Activated T-helper 2 cell treated with anti-CD3 and anti-CD28 coated beads, Interferon-gamma antibody, Interleukin-2, Interleukin-4, amounts not matched to agents 10 μg/mL and 5 μg/mL and 100 μg/mL, durations not matched to agents 14 hours and 24 hours and 36 hours (primary cell): ENCODE measurements at regions of chr9 and their contacts with region 1.

Region 1: GRCh38 chr9:113275157-113276131 is at the starts of genes CDC26 and PRPF4:
- DNase-seq: peak; percentile 94
- H3K4me3 Mint-ChIP-seq: no peak within 1 kb of the TSS
- H3K27ac Mint-ChIP-seq: no peak within 1 kb of the TSS
- H3K4me1 Mint-ChIP-seq: peaks cover 29% of the 10 kb centered on the region
- H3K27me3 Mint-ChIP-seq: no peaks in the 10 kb centered on the region
- total RNA-seq, gene CDC26: 50.2 and 51.2 TPM in 2 replicates
- total RNA-seq, gene PRPF4: 57.3 and 61.0 TPM in 2 replicates

Region 2: DNA sequence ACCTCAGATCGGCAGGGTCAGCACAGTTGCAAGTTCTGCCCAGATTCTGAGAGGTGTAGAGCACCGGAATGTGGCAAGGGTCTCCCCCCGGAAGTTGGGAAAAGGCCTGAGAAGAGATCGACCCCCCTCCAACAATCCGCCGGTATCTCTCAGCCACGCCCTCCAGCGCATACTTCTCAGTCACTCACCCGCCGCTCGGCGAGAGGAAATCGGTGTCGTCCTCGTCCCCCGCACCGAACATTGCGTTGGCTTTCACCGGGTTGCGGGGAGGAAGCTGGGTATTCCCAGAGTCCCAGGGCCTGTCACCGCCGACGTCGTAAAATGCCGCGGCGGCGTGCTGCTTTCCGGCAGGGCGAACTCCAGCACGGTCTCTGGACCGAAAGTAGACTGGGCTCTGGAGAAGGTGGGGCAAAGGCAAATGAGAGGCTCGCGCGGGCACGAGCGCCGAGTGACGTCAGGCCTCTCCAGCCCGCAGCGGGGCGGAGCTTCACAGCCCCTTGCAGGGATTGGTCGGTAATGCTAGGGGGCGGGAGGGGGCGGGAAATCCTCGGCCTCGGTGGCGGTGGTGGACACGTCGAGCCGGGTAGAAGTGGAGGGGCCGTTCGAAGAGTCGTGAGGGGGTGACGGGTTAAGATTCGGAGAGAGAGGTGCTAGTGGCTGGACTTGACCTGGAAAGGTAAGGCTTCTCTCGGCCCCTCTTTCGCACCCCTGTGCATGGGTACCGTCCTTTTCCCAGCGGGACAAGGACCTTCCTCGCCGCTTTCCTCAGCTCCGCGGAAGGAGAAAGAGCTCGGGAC is 54.2 kb before region 1 on chr9 and contains the starts of genes FKBP15 and SLC31A1:
- intact Hi-C with region 1: loop called (anchors 1 kb)
- DNase-seq: peak; percentile 94
- H3K4me3 Mint-ChIP-seq: peak within 1 kb of the TSS; percentile 92
- H3K27ac Mint-ChIP-seq: peak within 1 kb of the TSS; percentile 78
- H3K4me1 Mint-ChIP-seq: peaks cover 41% of the 10 kb centered on the region
- H3K27me3 Mint-ChIP-seq: no peaks in the 10 kb centered on the region
- total RNA-seq, gene FKBP15: 39.6 and 40.4 TPM in 2 replicates
- total RNA-seq, gene SLC31A1: 18.0 and 20.0 TPM in 2 replicates

Region 3: GRCh38 chr9:113317777-113318176 is 42.3 kb after region 1 on chr9:
- intact Hi-C with region 1: no loop called
- DNase-seq: no peak
- H3K4me3 Mint-ChIP-seq: no peak overlapping the region
- H3K27ac Mint-ChIP-seq: no peak overlapping the region
- H3K4me1 Mint-ChIP-seq: no peaks in the 10 kb centered on the region
- H3K27me3 Mint-ChIP-seq: no peaks in the 10 kb centered on the region

Region 4: GRCh38 chr9:113340017-113340699 is 64.7 kb after region 1 on chr9 and contains the start of gene WDR31:
- intact Hi-C with region 1: loop called (anchors 2 kb)
- DNase-seq: peak; percentile 75
- H3K4me3 Mint-ChIP-seq: peak within 1 kb of the TSS; percentile 86
- H3K27ac Mint-ChIP-seq: peak within 1 kb of the TSS; percentile 56
- H3K4me1 Mint-ChIP-seq: peaks cover 37% of the 10 kb centered on the region
- H3K27me3 Mint-ChIP-seq: no peaks in the 10 kb centered on the region
- total RNA-seq, gene WDR31: 1.9 and 2.1 TPM in 2 replicates

Region 5: GRCh38 chr9:113401027-113401792 is 125.8 kb after region 1 on chr9 and contains the start of gene ALAD:
- intact Hi-C with region 1: loop called (anchors 1 kb)
- DNase-seq: peak; percentile 99
- H3K4me3 Mint-ChIP-seq: peak within 1 kb of the TSS; percentile 94
- H3K27ac Mint-ChIP-seq: peak within 1 kb of the TSS; percentile 62
- H3K4me1 Mint-ChIP-seq: peaks cover 20% of the 10 kb centered on the region
- H3K27me3 Mint-ChIP-seq: no peaks in the 10 kb centered on the region
- total RNA-seq, gene ALAD: 27.9 and 28.3 TPM in 2 replicates

Region 6: GRCh38 chr9:113511856-113512761 is 236.7 kb after region 1 on chr9:
- intact Hi-C with region 1: loop called (anchors 2 kb)
- DNase-seq: peak; percentile 66
- H3K4me3 Mint-ChIP-seq: peak overlapping the region; percentile 54
- H3K27ac Mint-ChIP-seq: peak overlapping the region; percentile 96
- H3K4me1 Mint-ChIP-seq: peaks cover 56% of the 10 kb centered on the region
- H3K27me3 Mint-ChIP-seq: peaks cover 4% of the 10 kb centered on the region

Region 7: DNA sequence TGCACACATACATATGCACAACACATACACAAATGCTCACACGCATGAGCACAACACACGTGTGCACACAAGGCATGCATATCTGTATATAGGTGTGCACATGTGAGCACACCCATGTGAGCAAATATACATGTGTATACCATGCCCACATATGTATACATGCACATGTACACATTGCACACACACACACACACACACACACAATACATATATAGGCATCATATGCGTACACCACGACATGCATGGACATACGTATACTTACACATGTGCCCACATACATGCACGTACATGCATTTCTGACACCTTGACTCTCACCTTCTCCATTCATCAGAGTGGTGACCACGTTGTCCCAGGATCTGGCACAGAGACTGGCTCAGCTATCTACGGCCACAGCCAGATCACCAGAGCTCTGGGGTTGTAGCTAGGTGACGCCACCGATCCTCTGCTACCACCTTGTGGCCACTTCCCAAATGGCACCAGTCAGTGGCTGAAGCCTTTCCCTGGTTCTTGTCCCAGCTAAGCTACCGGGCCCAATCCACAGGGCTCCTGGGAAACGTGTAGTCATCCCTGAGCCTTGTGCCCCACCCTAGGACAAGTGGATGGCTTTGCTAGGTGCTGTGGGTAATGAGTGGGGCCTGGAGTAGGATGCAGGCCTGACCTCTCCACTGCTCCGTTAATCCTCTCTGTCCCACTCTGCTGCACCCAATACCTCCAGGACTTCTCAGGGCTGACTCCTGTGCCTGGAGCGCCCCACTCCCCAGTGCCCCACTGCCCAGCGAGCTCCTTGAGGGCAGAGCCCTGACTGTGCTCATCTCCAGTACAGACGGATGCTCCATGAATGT is 382.5 kb after region 1 on chr9:
- intact Hi-C with region 1: loop called (anchors 1 kb)
- DNase-seq: peak; percentile 64
- H3K4me3 Mint-ChIP-seq: no peak overlapping the region
- H3K27ac Mint-ChIP-seq: no peak overlapping the region
- H3K4me1 Mint-ChIP-seq: peaks cover 9% of the 10 kb centered on the region
- H3K27me3 Mint-ChIP-seq: peaks cover 21% of the 10 kb centered on the region